ENCODE measurements at regions of chr4 and their contacts with region 1.

Region 1: DNA sequence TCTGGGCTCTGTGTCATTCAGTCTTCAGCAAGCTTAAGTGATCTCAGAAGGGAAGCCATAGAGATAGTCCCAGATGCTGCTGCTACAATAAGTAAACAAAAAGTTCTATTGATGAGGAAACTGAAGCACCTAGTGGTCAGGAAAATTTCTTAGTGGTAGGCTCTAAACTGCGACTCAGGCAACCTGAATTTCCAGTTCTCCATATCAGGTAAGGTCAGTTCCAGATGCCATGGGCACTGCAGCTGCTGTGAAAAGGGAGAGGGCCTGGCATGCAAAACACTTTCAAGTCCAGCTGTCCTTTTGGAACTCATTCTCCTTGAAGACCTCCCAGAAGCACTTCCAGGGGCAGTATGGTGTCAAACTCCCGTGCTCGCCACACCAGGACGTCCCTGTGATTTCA is 46.2 kb downstream of the REELD1 start:
- DNase-seq: no peak
- H3K4me3 ChIP-seq: no peak overlapping the region
- H3K27ac ChIP-seq: no peak overlapping the region
- H3K4me1 ChIP-seq: no peaks in the 10 kb centered on the region
- H3K27me3 ChIP-seq: no peaks in the 10 kb centered on the region
- CTCF ChIP-seq: no peak
- EP300 ChIP-seq: no peak
- POLR2A ChIP-seq: no peak
- RAD21 ChIP-seq: no peak

Region 2: DNA sequence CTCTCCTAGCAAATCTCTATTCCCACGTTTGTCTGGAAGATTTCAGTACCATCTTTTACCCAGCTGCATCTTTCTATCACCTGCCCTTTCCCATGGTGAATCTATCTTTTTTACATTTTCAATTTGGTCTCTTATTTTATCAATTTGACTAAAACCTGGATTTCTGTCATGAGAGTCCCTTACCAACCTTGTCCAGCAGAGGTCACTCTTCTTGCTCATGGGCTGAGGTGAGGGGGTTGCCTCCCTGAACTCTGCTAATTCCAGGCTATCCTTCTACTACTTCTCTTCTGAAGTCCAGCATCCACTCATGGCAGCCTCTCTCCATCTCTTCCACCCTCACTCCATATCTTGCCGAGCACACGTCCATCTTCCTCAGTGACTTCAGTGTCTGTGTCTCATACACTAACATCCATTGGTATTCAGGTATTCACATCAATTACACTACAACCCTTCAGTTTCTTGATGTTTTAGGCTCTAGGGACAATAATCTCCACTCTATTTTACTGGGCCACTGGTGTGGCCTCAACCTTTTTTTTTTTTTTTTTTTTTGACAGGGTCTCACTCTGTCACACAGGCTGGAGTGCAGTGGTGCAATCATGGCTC is 304.1 kb before region 1 on chr4:
- CTCF ChIA-PET with region 1: no interaction called
- POLR2A ChIA-PET with region 1: no interaction called
- DNase-seq: peak in 1 of 2 experiments; percentile 68
- H3K4me3 ChIP-seq: no peak overlapping the region
- H3K27ac ChIP-seq: no peak overlapping the region
- H3K4me1 ChIP-seq: peaks cover 0 to 4% (median 0%) of the 10 kb centered on the region in 4 experiments; a peak in 1 of 7 replicates
- H3K27me3 ChIP-seq: no peaks in the 10 kb centered on the region
- CTCF ChIP-seq: peak; percentile 59 to 82 (median 69)
- EP300 ChIP-seq: no peak
- POLR2A ChIP-seq: no peak
- RAD21 ChIP-seq: peak; percentile 66 to 75

Region 3: DNA sequence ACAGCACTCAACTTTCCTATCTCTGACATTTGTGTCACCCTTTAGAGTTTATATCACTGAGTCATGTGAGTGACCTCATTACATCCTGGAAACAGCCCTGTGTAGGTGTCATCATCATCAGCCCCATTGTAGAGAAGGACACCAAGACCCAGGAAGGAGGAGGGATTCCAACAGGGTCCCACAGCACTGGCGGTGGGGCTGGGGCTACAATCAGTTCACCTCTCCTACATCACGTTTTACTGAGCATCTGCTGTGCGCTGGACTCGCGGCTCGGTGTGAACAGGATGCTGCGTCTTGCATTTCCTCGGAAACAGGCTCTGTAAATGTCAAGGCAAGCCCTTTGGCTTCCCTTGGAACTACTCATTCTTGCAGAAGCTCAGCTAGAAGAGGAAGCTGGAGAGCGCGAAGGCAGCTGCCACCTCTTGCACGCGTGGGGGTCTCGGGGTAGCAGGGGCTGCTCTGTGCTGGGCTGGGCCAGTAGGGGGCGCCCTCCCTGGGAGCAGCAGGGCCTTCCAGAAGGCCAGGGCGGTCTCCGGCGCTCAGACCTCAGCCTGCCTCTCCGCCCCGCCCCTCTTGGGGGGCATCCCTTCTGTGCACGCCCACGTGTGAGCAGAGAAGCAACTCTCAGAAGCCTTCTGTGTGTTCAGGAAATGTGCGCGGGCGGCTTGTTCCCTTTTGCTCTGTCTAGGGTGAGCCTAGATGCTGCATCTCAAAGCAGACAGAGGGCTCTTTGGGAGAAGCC is 17.2 kb before region 1 on chr4:
- CTCF ChIA-PET with region 1: interaction called, 22 read pairs
- POLR2A ChIA-PET with region 1: no interaction called
- DNase-seq: peak; percentile 36 to 90
- H3K4me3 ChIP-seq: no peak overlapping the region; a peak in 1 of 8 replicates
- H3K27ac ChIP-seq: no peak overlapping the region
- H3K4me1 ChIP-seq: peaks cover 0 to 3% (median 0%) of the 10 kb centered on the region in 4 experiments; a peak in 1 of 7 replicates
- H3K27me3 ChIP-seq: no peaks in the 10 kb centered on the region
- CTCF ChIP-seq: peak; percentile 69 to 91 (median 86)
- EP300 ChIP-seq: no peak
- POLR2A ChIP-seq: no peak
- RAD21 ChIP-seq: peak; percentile 57 to 62